Naive thymus-derived CD4-positive, alpha-beta T cell (primary cell): ENCODE measurements at regions of chr1 and their contacts with region 1.

Region 1: GRCh38 chr1:101136739-101137138 is 100.1 kb upstream of the S1PR1 start:
- DNase-seq: peak in 7 of 9 donors; percentile 11 to 59 (median 45)
- ATAC-seq: peak; percentile 77
- H3K4me3 ChIP-seq: no peak overlapping the region
- H3K4me3 Mint-ChIP-seq: peak overlapping the region in 9 of 10 donors; percentile 23 to 62 (median 49)
- H3K27ac ChIP-seq: peak overlapping the region; percentile 19
- H3K27ac Mint-ChIP-seq: peak overlapping the region; percentile 67 to 93 (median 85)
- H3K4me1 ChIP-seq: peaks cover 17 to 32% of the 10 kb centered on the region in 2 donors
- H3K4me1 Mint-ChIP-seq: peaks cover 37 to 67% (median 66%) of the 10 kb centered on the region in 7 donors
- H3K27me3 ChIP-seq: no peaks in the 10 kb centered on the region
- H3K27me3 Mint-ChIP-seq: no peaks in the 10 kb centered on the region

Region 2: DNA sequence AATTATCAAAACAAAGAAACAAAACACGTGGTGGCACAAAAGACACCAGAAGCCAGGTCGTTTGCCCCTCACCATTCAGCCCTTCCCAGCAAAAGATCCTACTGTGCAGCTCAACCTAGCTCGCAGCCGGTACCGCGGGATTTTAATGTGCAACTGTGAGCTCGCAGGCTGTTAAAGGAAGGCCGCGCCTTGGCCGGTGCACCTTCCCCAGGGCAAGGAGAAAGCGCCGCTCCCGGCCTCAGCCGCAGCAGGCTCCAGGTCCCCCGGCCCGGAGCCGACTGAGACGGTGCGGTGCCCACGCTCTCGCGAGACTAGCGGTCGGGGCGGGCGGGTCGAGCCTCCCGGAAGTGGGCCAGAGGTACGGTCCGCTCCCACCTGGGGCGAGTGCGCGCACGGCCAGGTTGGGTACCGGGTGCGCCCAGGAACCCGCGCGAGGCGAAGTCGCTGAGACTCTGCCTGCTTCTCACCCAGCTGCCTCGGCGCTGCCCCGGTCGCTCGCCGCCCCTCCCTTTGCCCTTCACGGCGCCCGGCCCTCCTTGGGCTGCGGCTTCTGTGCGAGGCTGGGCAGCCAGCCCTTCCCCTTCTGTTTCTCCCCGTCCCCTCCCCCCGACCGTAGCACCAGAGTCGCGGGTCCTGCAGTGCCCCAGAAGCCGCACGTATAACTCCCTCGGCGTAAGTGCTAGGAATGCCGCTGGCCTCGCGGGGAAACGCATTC is 1286.8 kb before region 1 on chr1 and contains the start of gene AGL:
- CTCF ChIA-PET with region 1: no interaction called
- POLR2A ChIA-PET with region 1: no interaction called
- intact Hi-C with region 1: no loop called
- DNase-seq: peak; percentile 76 to 88 (median 86)
- ATAC-seq: peak; percentile 97
- H3K4me3 ChIP-seq: peak within 1 kb of the TSS; percentile 81
- H3K4me3 Mint-ChIP-seq: peak within 1 kb of the TSS; percentile 89 to 99 (median 96)
- H3K27ac ChIP-seq: peak within 1 kb of the TSS; percentile 75
- H3K27ac Mint-ChIP-seq: peak within 1 kb of the TSS; percentile 86 to 98 (median 96)
- H3K4me1 ChIP-seq: peaks cover 7 to 10% of the 10 kb centered on the region in 2 donors
- H3K4me1 Mint-ChIP-seq: peaks cover 20 to 42% (median 37%) of the 10 kb centered on the region in 7 donors
- H3K27me3 ChIP-seq: no peaks in the 10 kb centered on the region
- H3K27me3 Mint-ChIP-seq: no peaks in the 10 kb centered on the region
- total RNA-seq, gene AGL: 11.5 to 20.1 (median 12.5) TPM

Region 3: GRCh38 chr1:100928128-100928527 is 208.6 kb before region 1 on chr1:
- CTCF ChIA-PET with region 1: interaction called, 10 read pairs
- POLR2A ChIA-PET with region 1: interaction called, 7 read pairs
- intact Hi-C with region 1: no loop called
- DNase-seq: peak in 1 of 9 donors; percentile 9
- ATAC-seq: peak; percentile 30
- H3K4me3 ChIP-seq: peak overlapping the region; percentile 15
- H3K4me3 Mint-ChIP-seq: no peak overlapping the region
- H3K27ac ChIP-seq: peak overlapping the region; percentile 74
- H3K27ac Mint-ChIP-seq: no peak overlapping the region
- H3K4me1 ChIP-seq: peaks cover 76 to 84% of the 10 kb centered on the region in 2 donors
- H3K4me1 Mint-ChIP-seq: peaks cover 26 to 61% (median 39%) of the 10 kb centered on the region in 7 donors
- H3K27me3 ChIP-seq: no peaks in the 10 kb centered on the region
- H3K27me3 Mint-ChIP-seq: no peaks in the 10 kb centered on the region

Region 4: DNA sequence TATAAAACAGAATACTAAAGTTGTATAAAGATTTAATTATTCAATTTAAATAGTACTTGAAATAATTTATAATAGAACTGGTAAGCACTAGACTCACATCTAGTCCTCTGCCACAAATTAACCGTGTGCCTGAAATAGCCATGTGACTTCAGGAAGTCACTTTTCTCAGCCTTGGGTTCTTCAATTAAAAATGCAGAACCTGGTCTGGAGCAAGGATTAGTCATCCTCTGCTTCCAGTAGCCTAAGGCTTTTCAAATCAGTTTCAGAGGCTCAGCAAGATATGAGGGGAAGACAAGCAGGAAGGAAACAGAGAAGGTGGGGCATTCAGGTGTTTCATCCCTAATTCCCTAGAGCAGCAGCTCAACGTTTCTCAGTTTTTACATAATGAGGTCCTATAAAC is 134.2 kb before region 1 on chr1:
- CTCF ChIA-PET with region 1: no interaction called
- POLR2A ChIA-PET with region 1: no interaction called
- intact Hi-C with region 1: no loop called
- DNase-seq: no peak
- ATAC-seq: peak; percentile 57
- H3K4me3 ChIP-seq: no peak overlapping the region
- H3K4me3 Mint-ChIP-seq: peak overlapping the region in 7 of 10 donors; percentile 5 to 60 (median 29)
- H3K27ac ChIP-seq: no peak overlapping the region
- H3K27ac Mint-ChIP-seq: peak overlapping the region in 7 of 9 donors; percentile 41 to 95 (median 85)
- H3K4me1 ChIP-seq: peaks cover 28 to 47% of the 10 kb centered on the region in 2 donors
- H3K4me1 Mint-ChIP-seq: peaks cover 42 to 74% (median 56%) of the 10 kb centered on the region in 7 donors
- H3K27me3 ChIP-seq: no peaks in the 10 kb centered on the region
- H3K27me3 Mint-ChIP-seq: no peaks in the 10 kb centered on the region

Region 5: DNA sequence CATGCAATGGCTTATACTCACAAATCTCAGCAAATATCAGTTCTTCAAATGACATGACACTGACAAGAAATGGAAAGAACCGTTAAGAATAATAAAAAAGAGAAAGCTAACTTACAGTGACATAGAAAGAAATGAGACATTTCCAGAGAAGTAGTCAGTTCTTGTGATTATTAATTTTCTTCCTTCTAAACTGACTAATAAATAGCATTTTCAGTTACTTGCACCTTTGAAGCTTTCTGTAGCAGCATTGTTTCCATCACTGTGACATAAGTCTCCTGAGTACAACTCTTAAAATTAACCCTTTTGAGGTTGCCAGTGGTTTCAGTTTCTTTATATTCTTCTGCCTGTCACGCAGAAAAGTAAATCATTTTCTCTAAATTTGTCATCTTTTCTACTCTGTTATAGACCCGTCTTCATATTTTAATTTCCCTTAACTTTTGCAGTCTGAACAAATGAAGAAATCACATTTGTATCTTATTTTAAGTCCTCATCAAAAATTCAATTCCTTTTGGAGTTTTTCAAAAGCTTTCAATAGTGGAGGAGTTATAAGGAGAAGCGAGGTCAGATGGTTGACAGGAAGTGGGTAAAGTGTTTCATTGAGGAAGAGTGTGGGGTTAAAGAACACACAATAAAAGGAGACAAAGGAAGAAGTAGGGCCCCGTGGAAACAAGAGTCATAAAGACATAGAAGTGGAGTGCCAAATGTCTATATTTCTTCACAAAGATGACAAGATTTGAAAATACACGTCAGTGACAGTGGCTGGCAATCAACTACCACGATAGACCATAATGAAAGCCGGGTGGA is 42.2 kb after region 1 on chr1:
- CTCF ChIA-PET with region 1: no interaction called
- POLR2A ChIA-PET with region 1: interaction called, 3 read pairs
- intact Hi-C with region 1: loop called in 1 of 2 experiments (anchors 1 kb)
- DNase-seq: peak in 7 of 9 donors; percentile 40 to 61 (median 46)
- ATAC-seq: peak; percentile 78
- H3K4me3 ChIP-seq: peak overlapping the region; percentile 3
- H3K4me3 Mint-ChIP-seq: peak overlapping the region; percentile 63 to 90 (median 80)
- H3K27ac ChIP-seq: peak overlapping the region; percentile 60
- H3K27ac Mint-ChIP-seq: peak overlapping the region; percentile 86 to 98 (median 92)
- H3K4me1 ChIP-seq: peaks cover 12 to 20% of the 10 kb centered on the region in 2 donors
- H3K4me1 Mint-ChIP-seq: peaks cover 24 to 69% (median 51%) of the 10 kb centered on the region in 7 donors
- H3K27me3 ChIP-seq: no peaks in the 10 kb centered on the region
- H3K27me3 Mint-ChIP-seq: no peaks in the 10 kb centered on the region

Region 6: DNA sequence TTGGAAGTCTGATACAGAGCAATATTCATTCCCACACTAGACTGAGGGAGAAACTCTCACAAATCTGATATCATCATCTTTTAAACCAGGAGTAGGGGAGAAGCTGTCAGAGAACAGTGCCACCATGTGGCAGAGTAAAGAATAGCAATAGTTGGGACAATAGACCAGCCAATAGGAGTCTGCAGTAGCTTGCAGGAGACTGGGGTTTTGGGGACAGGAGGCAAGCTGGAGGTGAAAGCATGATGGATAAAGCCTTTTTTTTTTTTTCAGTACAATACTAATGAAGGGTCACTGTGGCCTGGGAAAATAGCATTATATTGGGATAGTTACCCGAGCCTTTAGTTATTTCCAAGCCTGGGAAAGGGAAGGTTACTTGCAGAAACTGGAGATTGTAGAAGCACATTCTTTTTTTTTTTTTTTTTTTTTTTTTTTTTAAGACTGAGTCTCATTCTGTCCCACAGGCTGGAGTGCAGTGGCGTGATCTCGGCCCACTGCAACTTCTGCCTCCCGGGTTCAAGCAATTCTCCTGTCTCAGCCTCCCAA is 220.8 kb after region 1 on chr1:
- CTCF ChIA-PET with region 1: interaction called, 6 read pairs
- POLR2A ChIA-PET with region 1: no interaction called
- intact Hi-C with region 1: loop called (anchors 1 to 5 kb)
- DNase-seq: peak; percentile 26 to 90 (median 85)
- ATAC-seq: peak; percentile 100
- H3K4me3 ChIP-seq: no peak overlapping the region
- H3K4me3 Mint-ChIP-seq: peak overlapping the region in 3 of 10 donors; percentile 1 to 84 (median 60)
- H3K27ac ChIP-seq: no peak overlapping the region
- H3K27ac Mint-ChIP-seq: peak overlapping the region in 8 of 9 donors; percentile 42 to 97 (median 80)
- H3K4me1 ChIP-seq: peaks cover 6 to 7% of the 10 kb centered on the region in 2 donors
- H3K4me1 Mint-ChIP-seq: peaks cover 5 to 12% (median 9%) of the 10 kb centered on the region in 7 donors
- H3K27me3 ChIP-seq: no peaks in the 10 kb centered on the region
- H3K27me3 Mint-ChIP-seq: peaks cover 0 to 19% (median 0%) of the 10 kb centered on the region in 5 donors